OCI-LY7 (cell line): ENCODE measurements at regions of chr7 and their contacts with region 1.

Region 1: GRCh38 chr7:43582503-43583423 is at the start of gene STK17A:
- DNase-seq: peak; percentile 94
- H3K4me3 ChIP-seq: peak within 1 kb of the TSS; percentile 98
- H3K27ac ChIP-seq: peak within 1 kb of the TSS; percentile 83
- H3K4me1 ChIP-seq: peaks cover 29% of the 10 kb centered on the region
- CTCF ChIP-seq: peak; percentile 96
- total RNA-seq, gene STK17A: 28.7 and 32.4 TPM in 2 replicates

Region 2: GRCh38 chr7:42931834-42932651 is 650.7 kb before region 1 on chr7 and contains the starts of genes MRPL32 and PSMA2:
- CTCF ChIA-PET with region 1: no interaction called
- POLR2A ChIA-PET with region 1: no interaction called
- intact Hi-C with region 1: loop called (anchors 10 kb)
- DNase-seq: peak; percentile 98
- H3K4me3 ChIP-seq: peak within 1 kb of the TSS; percentile 96
- H3K27ac ChIP-seq: peak within 1 kb of the TSS; percentile 58
- H3K4me1 ChIP-seq: peaks cover 41% of the 10 kb centered on the region
- CTCF ChIP-seq: no peak
- total RNA-seq, gene MRPL32: 61.8 and 89.7 TPM in 2 replicates
- total RNA-seq, gene PSMA2: 40.2 and 45.7 TPM in 2 replicates

Region 3: DNA sequence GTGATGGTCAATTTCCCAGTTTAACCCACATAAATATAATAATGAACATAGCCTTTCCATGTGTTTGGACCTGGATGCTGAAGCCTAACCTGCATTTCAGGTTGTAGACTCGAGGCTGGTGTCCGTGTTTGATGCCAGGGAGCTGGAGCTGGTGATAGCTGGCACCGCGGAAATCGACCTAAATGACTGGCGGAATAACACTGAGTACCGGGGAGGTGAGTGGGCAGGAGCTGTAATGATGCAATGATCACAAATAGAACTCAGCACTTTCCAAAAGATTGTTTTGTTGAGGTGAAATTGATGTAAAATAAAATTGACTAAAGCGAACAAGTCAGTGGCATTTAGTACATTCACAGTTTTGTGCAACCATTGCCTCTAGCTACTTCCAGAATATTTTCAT is 30.6 kb before region 1 on chr7:
- CTCF ChIA-PET with region 1: interaction called, 15 read pairs
- POLR2A ChIA-PET with region 1: interaction called, 4 read pairs
- intact Hi-C with region 1: no loop called
- DNase-seq: no peak
- H3K4me3 ChIP-seq: no peak overlapping the region
- H3K27ac ChIP-seq: no peak overlapping the region
- H3K4me1 ChIP-seq: no peaks in the 10 kb centered on the region
- CTCF ChIP-seq: no peak

Region 4: GRCh38 chr7:43562383-43562782 is 20.4 kb before region 1 on chr7:
- CTCF ChIA-PET with region 1: no interaction called
- POLR2A ChIA-PET with region 1: no interaction called
- intact Hi-C with region 1: no loop called
- DNase-seq: no peak
- H3K4me3 ChIP-seq: no peak overlapping the region
- H3K27ac ChIP-seq: no peak overlapping the region
- H3K4me1 ChIP-seq: no peaks in the 10 kb centered on the region
- CTCF ChIP-seq: no peak

Region 5: GRCh38 chr7:43647673-43648472 is 65.1 kb after region 1 on chr7:
- CTCF ChIA-PET with region 1: interaction called, 21 read pairs
- POLR2A ChIA-PET with region 1: interaction called, 27 read pairs
- intact Hi-C with region 1: loop called (anchors 1 kb)
- DNase-seq: peak; percentile 57
- H3K4me3 ChIP-seq: peak overlapping the region; percentile 64
- H3K27ac ChIP-seq: peak overlapping the region; percentile 97
- H3K4me1 ChIP-seq: peaks cover 82% of the 10 kb centered on the region
- CTCF ChIP-seq: no peak

Region 6: GRCh38 chr7:43721193-43721806 is 138.5 kb after region 1 on chr7:
- CTCF ChIA-PET with region 1: interaction called, 16 read pairs
- POLR2A ChIA-PET with region 1: interaction called, 9 read pairs
- intact Hi-C with region 1: loop called (anchors 2 kb)
- DNase-seq: peak; percentile 76
- H3K4me3 ChIP-seq: no peak overlapping the region
- H3K27ac ChIP-seq: no peak overlapping the region
- H3K4me1 ChIP-seq: no peaks in the 10 kb centered on the region
- CTCF ChIP-seq: peak; percentile 96

Region 7: DNA sequence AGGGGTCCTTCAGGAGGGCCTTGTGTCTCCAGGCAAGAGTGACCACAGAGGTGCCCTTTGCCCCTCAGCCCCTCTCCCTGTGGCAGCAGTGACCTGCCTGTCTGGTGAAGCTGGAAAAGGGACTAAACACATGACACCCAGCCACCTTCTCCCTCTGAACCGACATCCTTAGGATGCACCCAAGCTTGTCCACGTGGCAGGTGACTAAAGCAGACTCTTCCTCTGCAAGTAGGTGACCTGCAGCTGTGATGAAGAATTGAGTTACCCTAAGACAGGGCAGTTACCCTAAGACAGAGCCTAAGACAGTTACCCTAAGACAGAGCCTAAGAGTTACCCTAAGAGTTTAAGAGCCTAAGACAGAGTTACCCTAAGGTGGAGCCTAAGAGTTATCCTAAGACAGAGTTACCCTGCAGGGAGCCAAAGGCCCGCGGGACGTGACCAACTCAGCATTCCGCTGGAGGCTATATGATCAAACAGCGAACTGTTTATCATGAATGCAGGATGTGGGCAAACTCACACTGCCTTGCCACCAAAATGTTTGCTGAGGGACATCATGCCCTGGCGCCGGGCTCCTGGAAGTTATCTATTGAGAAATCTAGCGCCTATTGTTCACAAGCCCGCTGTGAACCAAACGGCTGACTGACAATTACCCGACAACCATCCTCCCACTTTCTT is 225.5 kb after region 1 on chr7:
- CTCF ChIA-PET with region 1: interaction called, 4 read pairs
- POLR2A ChIA-PET with region 1: no interaction called
- intact Hi-C with region 1: loop called (anchors 2 kb)
- DNase-seq: no peak
- H3K4me3 ChIP-seq: no peak overlapping the region
- H3K27ac ChIP-seq: no peak overlapping the region
- H3K4me1 ChIP-seq: no peaks in the 10 kb centered on the region
- CTCF ChIP-seq: no peak